PC-9 (cell line): ENCODE measurements at regions of chr3 and their contacts with region 1.

Region 1: DNA sequence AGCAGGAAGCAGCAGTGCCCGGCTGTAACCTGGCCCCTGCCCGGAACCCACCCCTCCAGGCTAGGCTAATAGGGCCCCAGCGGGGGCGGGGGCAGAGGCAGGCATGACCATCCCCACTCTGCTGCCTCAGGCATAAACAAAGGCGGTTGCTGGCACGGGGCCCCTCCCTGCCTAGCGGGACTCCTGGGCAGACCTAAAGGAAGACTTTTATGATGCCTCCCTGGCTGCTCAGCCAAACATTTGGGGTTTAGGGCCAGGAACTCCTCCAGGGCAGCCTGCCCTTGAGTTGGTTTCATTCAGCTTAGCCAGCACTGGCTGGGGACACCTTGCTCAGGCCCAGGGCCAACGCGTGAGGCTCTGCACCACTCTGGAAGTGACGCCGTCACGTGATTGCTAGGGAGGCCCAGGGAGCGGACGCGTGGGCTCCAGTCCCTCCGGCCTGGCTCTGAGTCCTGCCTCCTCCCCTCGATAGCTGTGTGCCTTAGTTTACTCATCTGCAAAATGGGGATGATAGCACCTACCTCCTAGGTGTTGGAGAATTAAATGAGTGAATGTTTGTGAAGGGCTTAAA is 27.7 kb downstream of the HDAC11 start:
- DNase-seq: peak; percentile 52 to 92
- H3K4me3 ChIP-seq: no peak overlapping the region
- H3K27ac ChIP-seq: peak overlapping the region; percentile 53
- H3K4me1 ChIP-seq: peaks cover 65% of the 10 kb centered on the region
- H3K27me3 ChIP-seq: no peaks in the 10 kb centered on the region
- CTCF ChIP-seq: no peak

Region 2: DNA sequence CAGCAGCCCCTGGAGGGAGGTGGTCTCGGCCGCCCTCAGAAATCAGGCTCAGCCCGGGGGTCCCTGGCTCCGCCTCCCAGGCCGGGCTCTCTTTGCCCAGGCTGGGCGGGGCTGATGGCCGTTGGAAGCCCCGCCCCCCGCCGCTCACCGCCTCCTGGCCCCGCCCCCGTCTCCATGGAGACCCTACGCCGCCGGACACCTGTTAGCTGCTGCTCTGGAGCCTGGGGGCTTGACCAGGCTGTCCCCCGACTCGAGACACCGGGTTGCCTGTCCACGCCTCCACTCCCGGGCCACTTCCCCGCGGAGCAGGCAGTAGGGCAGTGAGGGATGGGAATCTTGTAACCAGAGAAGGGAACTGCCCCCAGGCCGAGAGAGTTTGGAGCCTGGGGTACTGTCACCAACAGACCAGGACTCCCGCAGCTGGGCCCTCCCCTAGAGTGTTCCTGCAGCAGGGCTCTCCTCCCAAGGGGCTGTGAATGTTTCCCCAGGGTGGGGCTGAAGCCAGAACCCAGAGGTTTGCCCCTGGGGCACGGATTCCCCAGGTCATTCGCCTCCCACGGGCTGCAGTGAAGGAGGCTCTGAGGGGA is 638.7 kb before region 1 on chr3:
- CTCF ChIA-PET with region 1: no interaction called
- POLR2A ChIA-PET with region 1: no interaction called
- intact Hi-C with region 1: no loop called
- DNase-seq: peak in 1 of 2 experiments; percentile 58
- H3K4me3 ChIP-seq: no peak overlapping the region
- H3K27ac ChIP-seq: no peak overlapping the region
- H3K4me1 ChIP-seq: no peaks in the 10 kb centered on the region
- H3K27me3 ChIP-seq: peaks cover 60% of the 10 kb centered on the region
- CTCF ChIP-seq: no peak

Region 3: DNA sequence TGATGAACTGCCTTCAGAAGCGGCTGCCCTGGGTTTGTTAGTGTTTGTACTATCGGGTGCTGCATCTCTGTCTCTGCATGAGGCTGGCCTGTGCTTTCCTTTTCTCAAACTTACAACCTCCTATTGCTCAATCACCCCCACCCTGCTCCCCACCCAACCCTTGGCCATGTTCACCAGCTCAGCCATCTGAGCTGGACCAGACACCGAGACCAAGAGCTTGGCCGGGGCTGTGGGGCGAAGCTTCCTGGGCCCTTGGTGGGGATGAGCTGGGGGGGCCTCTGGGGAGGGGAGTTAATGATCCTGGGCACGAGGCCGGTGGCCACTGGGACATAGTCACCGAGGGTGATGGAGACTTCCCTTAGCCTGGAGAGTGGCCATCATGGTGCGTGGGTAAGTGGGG is 24.3 kb after region 1 on chr3:
- CTCF ChIA-PET with region 1: no interaction called
- POLR2A ChIA-PET with region 1: interaction called, 10 read pairs
- intact Hi-C with region 1: loop called (anchors 2 kb)
- DNase-seq: no peak
- H3K4me3 ChIP-seq: no peak overlapping the region
- H3K27ac ChIP-seq: no peak overlapping the region
- H3K4me1 ChIP-seq: peaks cover 56% of the 10 kb centered on the region
- H3K27me3 ChIP-seq: no peaks in the 10 kb centered on the region
- CTCF ChIP-seq: no peak

Region 4: DNA sequence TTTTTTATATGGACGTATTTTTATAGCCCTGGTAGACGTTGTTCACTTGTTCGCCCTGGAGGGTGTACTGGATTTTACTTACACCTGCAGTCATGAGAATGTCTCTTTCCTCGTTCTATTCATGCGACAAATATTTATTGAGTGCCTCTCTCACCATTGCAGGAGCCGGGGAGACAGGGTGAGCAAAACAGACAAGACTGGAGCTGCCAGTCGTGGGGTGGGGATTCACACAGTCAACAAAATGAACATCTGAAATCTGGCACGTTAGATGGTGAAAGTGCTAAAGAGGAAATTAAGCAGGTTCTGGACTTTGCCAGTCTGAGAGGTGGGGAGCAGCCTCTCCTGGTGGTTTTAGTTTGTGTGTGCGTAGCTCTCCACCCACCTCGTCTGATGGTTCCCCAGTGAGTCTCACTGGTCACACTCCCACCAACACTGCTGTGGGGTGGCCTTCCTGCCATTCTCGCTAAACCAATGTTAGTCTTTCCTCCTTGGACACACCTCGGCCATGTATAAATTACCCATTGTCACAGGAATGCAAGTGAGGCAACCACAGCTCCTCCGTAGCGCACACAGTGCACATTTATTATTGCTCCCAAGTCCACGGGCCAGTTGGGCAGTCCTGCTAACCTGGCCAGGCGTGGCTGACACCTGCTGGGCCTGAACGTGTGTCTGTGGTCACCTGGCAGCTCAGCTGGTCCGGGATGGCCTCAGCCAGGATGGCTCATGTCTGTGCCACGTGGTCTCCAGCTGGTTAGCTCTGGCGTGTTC is 72.6 kb after region 1 on chr3:
- CTCF ChIA-PET with region 1: no interaction called
- POLR2A ChIA-PET with region 1: no interaction called
- intact Hi-C with region 1: loop called (anchors 1 kb)
- DNase-seq: peak; percentile 69 to 91
- H3K4me3 ChIP-seq: no peak overlapping the region; the same call in 1 of the 2 replicates
- H3K27ac ChIP-seq: peak overlapping the region; percentile 72
- H3K4me1 ChIP-seq: peaks cover 31% of the 10 kb centered on the region
- H3K27me3 ChIP-seq: no peaks in the 10 kb centered on the region
- CTCF ChIP-seq: no peak

Region 5: DNA sequence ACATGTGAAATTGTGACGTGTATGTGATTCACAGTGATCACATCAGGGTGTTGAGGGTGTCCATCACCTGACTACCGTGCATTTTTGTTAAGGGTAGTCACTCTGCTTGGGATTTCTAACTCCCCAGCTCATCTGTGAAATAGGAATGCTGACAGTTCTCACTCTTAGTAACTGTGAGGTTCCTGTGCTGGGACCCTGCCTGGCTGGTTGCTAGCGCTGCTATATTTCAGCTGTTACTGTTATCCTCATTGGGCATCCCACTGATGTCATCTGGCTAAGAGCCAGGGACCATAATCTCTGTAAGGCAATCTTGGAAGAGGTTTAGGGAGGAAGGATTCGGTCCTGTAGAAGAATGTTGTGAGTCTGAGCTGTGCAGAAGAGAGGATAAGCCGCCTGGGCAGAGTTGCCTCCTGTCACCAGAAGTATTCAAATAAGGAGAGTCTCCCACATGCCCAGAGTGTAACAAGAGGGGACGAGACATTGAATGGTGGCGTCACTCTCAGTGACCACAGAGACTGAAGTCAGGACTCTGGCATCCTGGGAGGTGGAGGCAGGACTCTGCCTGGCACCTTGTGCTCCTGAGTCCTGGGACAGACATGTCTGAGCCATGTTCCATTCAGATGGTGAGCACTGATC is 93.2 kb after region 1 on chr3:
- CTCF ChIA-PET with region 1: interaction called, 3 read pairs
- POLR2A ChIA-PET with region 1: no interaction called
- intact Hi-C with region 1: loop called (anchors 2 kb)
- DNase-seq: peak; percentile 59 to 91
- H3K4me3 ChIP-seq: no peak overlapping the region
- H3K27ac ChIP-seq: peak overlapping the region; percentile 38
- H3K4me1 ChIP-seq: peaks cover 37% of the 10 kb centered on the region
- H3K27me3 ChIP-seq: no peaks in the 10 kb centered on the region
- CTCF ChIP-seq: no peak